Activated naive CD4-positive, alpha-beta T cell treated with anti-CD3 and anti-CD28 coated beads for 36 hours (primary cell): ENCODE measurements at regions of chr3 and their contacts with region 1.

Region 1: GRCh38 chr3:38136777-38137614 is at the start of gene ACAA1:
- DNase-seq: peak; percentile 99
- H3K4me3 Mint-ChIP-seq: peak within 1 kb of the TSS; percentile 88
- H3K27ac Mint-ChIP-seq: peak within 1 kb of the TSS; percentile 99
- H3K4me1 Mint-ChIP-seq: peaks cover 53% of the 10 kb centered on the region
- H3K27me3 Mint-ChIP-seq: no peaks in the 10 kb centered on the region
- total RNA-seq, gene ACAA1: 57.5 to 58.7 TPM

Region 2: DNA sequence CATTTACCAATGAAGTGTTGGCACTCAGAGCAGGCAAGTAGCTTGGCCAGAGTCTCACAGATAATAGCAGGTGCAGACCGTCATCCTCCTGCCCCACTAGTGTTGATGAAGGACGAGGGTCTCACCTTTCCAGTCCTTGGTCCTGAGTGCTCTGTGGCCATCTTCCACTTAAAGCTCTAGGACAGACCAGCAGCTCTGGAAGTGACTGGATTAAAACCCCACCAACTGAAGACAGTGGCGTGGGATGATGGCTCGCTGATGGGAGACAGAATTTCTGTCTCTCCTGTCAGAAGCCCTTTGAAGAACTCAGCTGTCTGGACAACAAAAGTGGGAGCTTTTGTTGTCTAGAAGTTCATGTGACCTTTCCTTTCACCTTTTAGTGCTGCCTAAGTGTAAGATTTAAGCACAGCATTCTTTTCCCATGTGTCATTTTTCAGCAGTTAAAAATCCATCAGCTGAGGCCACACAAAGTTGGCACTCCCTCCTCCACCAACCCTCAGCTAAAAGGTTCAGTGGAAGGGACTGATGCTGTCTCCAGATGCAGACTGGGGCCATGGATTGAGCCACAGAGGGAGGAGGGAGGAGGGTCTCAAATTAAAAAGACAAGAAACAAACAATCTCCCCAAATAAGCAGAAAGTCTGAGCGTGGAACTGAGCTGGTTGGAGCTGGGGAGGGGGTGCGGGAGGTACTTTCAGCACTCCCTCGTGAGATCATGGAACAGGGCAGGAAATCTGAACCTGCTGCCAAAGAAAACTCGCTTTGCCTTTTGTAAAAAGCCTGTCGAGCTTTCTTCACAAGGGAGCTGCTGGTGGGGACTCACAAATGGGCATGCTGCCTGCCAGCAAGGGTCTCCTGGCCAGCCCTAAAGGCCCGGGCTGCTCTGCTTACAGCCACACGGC is 423.8 kb before region 1 on chr3:
- CTCF ChIA-PET with region 1: no interaction called
- intact Hi-C with region 1: no loop called
- DNase-seq: no peak
- H3K4me3 Mint-ChIP-seq: no peak overlapping the region
- H3K27ac Mint-ChIP-seq: no peak overlapping the region
- H3K4me1 Mint-ChIP-seq: no peaks in the 10 kb centered on the region
- H3K27me3 Mint-ChIP-seq: peaks cover 3% of the 10 kb centered on the region

Region 3: GRCh38 chr3:37967260-37967881 is 169.6 kb before region 1 on chr3:
- CTCF ChIA-PET with region 1: no interaction called
- intact Hi-C with region 1: no loop called
- DNase-seq: peak; percentile 81
- H3K4me3 Mint-ChIP-seq: no peak overlapping the region
- H3K27ac Mint-ChIP-seq: no peak overlapping the region
- H3K4me1 Mint-ChIP-seq: peaks cover 4% of the 10 kb centered on the region
- H3K27me3 Mint-ChIP-seq: no peaks in the 10 kb centered on the region

Region 4: DNA sequence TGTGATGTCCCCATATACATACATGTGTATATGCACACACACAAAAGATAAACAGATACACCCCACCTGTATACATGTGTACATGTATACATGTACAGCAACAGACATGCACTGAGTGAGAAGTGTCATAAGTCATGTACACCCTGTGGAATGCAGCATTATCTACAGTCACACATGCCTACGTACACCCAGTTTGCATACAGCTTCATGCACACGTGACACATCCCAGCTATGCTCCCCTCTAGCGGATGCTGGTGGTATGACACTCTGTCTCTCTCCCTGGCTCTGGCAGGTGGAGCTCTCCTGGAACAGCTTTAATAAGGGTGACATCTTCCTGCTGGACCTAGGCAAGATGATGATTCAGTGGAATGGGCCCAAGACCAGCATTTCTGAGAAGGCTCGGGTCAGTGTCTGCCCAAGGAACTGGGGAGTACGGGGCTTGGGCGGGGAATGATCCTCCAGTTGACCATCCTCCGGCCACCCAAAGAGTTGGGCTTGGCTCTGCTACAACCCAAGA is 140.2 kb before region 1 on chr3:
- CTCF ChIA-PET with region 1: no interaction called
- intact Hi-C with region 1: loop called (anchors 1 kb)
- DNase-seq: peak; percentile 94
- H3K4me3 Mint-ChIP-seq: no peak overlapping the region
- H3K27ac Mint-ChIP-seq: peak overlapping the region; percentile 93
- H3K4me1 Mint-ChIP-seq: peaks cover 48% of the 10 kb centered on the region
- H3K27me3 Mint-ChIP-seq: no peaks in the 10 kb centered on the region

Region 5: GRCh38 chr3:38154033-38154494 is 17.1 kb after region 1 on chr3:
- CTCF ChIA-PET with region 1: interaction called, 4 read pairs
- intact Hi-C with region 1: loop called (anchors 1 kb)
- DNase-seq: no peak
- H3K4me3 Mint-ChIP-seq: no peak overlapping the region
- H3K27ac Mint-ChIP-seq: no peak overlapping the region
- H3K4me1 Mint-ChIP-seq: peaks cover 35% of the 10 kb centered on the region
- H3K27me3 Mint-ChIP-seq: no peaks in the 10 kb centered on the region

Region 6: GRCh38 chr3:38297947-38298711 is 161.1 kb after region 1 on chr3:
- CTCF ChIA-PET with region 1: interaction called, 5 read pairs
- intact Hi-C with region 1: loop called (anchors 5 kb)
- DNase-seq: no peak
- H3K4me3 Mint-ChIP-seq: no peak overlapping the region
- H3K27ac Mint-ChIP-seq: no peak overlapping the region
- H3K4me1 Mint-ChIP-seq: no peaks in the 10 kb centered on the region
- H3K27me3 Mint-ChIP-seq: peaks cover 6% of the 10 kb centered on the region

Region 7: GRCh38 chr3:38453075-38453912 is 316.3 kb after region 1 on chr3 and contains the start of gene ACVR2B:
- CTCF ChIA-PET with region 1: no interaction called
- intact Hi-C with region 1: loop called (anchors 2 kb)
- DNase-seq: peak; percentile 74
- H3K4me3 Mint-ChIP-seq: peak within 1 kb of the TSS; percentile 96
- H3K27ac Mint-ChIP-seq: peak within 1 kb of the TSS; percentile 74
- H3K4me1 Mint-ChIP-seq: peaks cover 2% of the 10 kb centered on the region
- H3K27me3 Mint-ChIP-seq: no peaks in the 10 kb centered on the region
- total RNA-seq, gene ACVR2B: 6.5 to 6.9 TPM

Region 8: GRCh38 chr3:38496131-38496910 is 359.3 kb after region 1 on chr3 and contains the start of gene EXOG:
- CTCF ChIA-PET with region 1: interaction called, 5 read pairs
- intact Hi-C with region 1: loop called (anchors 2 kb)
- DNase-seq: peak; percentile 97
- H3K4me3 Mint-ChIP-seq: peak within 1 kb of the TSS; percentile 92
- H3K27ac Mint-ChIP-seq: peak within 1 kb of the TSS; percentile 85
- H3K4me1 Mint-ChIP-seq: peaks cover 16% of the 10 kb centered on the region
- H3K27me3 Mint-ChIP-seq: no peaks in the 10 kb centered on the region
- total RNA-seq, gene EXOG: 15.9 to 17.3 TPM

Region 9: DNA sequence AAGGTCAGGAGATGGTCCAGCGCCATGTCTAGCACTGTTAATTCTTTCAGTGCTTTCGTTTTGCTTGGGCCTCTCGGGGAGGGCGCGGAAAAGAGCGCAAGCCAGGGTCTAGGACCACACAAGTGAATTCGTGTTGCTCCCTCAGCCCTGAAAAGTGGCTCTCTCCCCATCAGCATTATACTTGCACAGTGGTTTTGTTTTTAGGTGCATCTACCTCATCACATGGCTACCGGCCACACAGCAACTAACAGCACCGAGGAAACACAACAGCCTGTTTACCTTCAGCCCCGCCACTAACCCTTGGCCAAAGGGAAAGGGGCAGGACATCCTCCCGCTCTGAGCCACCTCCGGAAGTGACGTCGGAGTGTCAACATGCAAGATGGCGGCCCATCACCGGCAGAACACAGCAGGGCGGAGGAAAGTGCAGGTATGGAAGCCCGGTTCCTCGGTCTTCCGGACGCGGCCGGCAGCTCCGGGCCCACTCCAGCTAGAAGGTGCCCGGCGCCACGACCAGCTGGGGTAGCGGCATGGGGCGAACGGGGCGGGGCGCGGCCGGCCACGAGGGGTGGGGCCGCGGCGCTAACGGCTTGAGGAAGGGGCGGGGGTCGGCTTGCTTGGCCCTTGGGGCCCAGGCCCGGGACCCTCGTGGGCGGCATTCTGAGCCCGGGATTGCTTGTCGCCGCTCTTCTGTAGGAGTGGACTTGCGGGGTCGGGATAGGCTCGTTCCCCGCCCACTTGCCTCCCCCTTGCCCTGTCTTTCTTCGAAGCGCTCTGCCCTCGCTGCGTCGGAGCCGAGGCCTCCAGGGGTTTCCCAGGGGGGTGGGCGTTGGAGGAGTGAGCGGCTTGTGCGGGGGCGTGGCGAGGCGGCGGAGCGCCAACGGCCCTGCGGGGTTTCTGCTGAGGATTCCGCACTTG is 914.9 kb after region 1 on chr3 and contains the starts of genes SCN11A and WDR48:
- CTCF ChIA-PET with region 1: no interaction called
- intact Hi-C with region 1: loop called (anchors 2 kb)
- DNase-seq: peak; percentile 97
- H3K4me3 Mint-ChIP-seq: peak within 1 kb of the TSS; percentile 96
- H3K27ac Mint-ChIP-seq: peak within 1 kb of the TSS; percentile 98
- H3K4me1 Mint-ChIP-seq: peaks cover 50% of the 10 kb centered on the region
- H3K27me3 Mint-ChIP-seq: no peaks in the 10 kb centered on the region
- total RNA-seq, gene SCN11A: 0.05 TPM
- total RNA-seq, gene WDR48: 32.3 to 32.9 TPM